Calu3 (cell line): ENCODE measurements at regions of chr18 and their contacts with region 1.

Region 1: GRCh38 chr18:22913857-22914256 is 19.3 kb upstream of the RBBP8 start:
- DNase-seq: peak; percentile 85
- H3K4me3 Mint-ChIP-seq: peak overlapping the region; percentile 76
- H3K27ac Mint-ChIP-seq: peak overlapping the region; percentile 94
- H3K4me1 Mint-ChIP-seq: peaks cover 38% of the 10 kb centered on the region
- H3K27me3 Mint-ChIP-seq: no peaks in the 10 kb centered on the region
- CTCF ChIP-seq: no peak

Region 2: DNA sequence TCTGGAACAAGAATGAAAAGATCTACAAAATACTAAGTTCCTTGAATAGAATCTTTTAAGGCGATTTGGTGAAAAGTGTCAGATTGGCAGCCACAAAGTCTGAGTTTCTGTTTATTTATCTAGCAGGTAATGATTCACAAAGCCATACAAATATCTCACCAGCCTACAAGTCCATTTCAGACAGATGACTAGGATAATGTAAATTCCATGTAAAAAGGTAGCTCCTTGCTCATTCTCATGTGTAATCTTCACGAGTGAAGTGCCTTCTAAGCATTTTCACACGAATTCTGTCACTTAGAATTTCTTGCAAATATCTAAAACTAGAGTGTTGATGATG is 202.5 kb before region 1 on chr18:
- CTCF ChIA-PET with region 1: no interaction called
- intact Hi-C with region 1: no loop called
- DNase-seq: no peak
- H3K4me3 Mint-ChIP-seq: peak overlapping the region; percentile 74
- H3K27ac Mint-ChIP-seq: peak overlapping the region; percentile 70
- H3K4me1 Mint-ChIP-seq: peaks cover 42% of the 10 kb centered on the region
- H3K27me3 Mint-ChIP-seq: no peaks in the 10 kb centered on the region
- CTCF ChIP-seq: no peak

Region 3: DNA sequence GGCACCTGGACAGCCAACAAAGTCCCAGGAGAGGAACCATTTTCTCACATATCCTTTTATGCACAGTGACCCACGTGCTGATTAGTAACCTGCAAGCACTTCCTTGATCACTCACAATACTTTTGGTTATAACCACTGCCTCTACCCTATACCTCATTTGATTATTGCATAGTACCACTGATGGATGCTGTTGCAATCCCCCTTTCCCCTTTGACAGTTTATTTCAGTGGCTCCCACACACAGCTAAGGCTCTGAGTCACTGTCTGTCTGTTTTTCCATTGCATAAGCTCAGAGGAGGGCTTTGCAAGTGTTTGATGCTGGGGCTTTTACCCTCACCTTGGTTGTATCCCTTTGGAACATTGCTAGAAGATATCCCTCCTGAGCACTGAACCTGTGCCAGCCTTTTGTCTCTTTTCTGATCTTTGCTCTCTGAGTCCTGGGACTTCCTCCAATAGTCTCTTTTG is 82.4 kb before region 1 on chr18:
- CTCF ChIA-PET with region 1: interaction called, 3 read pairs
- intact Hi-C with region 1: loop called (anchors 5 kb)
- DNase-seq: no peak
- H3K4me3 Mint-ChIP-seq: no peak overlapping the region
- H3K27ac Mint-ChIP-seq: peak overlapping the region; percentile 25
- H3K4me1 Mint-ChIP-seq: peaks cover 34% of the 10 kb centered on the region
- H3K27me3 Mint-ChIP-seq: no peaks in the 10 kb centered on the region
- CTCF ChIP-seq: no peak

Region 4: DNA sequence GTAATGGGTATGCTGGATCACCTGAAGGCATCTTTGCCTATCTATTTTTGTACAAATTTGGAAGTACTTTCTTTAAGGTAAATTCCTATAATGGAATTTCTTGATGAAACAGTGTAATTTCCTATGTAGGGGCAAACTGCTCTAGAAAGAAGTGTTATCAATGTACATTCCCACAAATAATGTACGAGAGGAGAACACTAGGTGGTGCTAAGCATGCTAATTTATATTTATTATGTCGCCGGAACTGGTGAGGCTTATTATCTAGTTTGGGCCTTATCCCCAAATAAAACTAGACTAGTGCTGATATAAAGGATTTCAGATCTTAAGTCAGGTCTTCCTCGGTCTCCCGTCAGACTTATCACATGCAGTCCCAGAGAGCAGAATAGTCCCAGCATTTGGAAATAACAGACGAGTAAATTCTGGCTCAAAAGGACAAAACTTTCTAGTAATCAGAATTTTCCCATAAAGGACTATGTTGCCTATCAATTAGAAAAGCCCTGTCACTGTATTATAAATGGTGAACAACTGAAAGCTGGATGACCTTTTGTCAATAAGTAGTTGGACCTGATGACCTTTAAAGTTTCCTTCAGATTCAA is 67.7 kb before region 1 on chr18:
- CTCF ChIA-PET with region 1: interaction called, 3 read pairs
- intact Hi-C with region 1: loop called (anchors 1 kb)
- DNase-seq: no peak
- H3K4me3 Mint-ChIP-seq: no peak overlapping the region
- H3K27ac Mint-ChIP-seq: no peak overlapping the region
- H3K4me1 Mint-ChIP-seq: peaks cover 30% of the 10 kb centered on the region
- H3K27me3 Mint-ChIP-seq: no peaks in the 10 kb centered on the region
- CTCF ChIP-seq: peak; percentile 31

Region 5: DNA sequence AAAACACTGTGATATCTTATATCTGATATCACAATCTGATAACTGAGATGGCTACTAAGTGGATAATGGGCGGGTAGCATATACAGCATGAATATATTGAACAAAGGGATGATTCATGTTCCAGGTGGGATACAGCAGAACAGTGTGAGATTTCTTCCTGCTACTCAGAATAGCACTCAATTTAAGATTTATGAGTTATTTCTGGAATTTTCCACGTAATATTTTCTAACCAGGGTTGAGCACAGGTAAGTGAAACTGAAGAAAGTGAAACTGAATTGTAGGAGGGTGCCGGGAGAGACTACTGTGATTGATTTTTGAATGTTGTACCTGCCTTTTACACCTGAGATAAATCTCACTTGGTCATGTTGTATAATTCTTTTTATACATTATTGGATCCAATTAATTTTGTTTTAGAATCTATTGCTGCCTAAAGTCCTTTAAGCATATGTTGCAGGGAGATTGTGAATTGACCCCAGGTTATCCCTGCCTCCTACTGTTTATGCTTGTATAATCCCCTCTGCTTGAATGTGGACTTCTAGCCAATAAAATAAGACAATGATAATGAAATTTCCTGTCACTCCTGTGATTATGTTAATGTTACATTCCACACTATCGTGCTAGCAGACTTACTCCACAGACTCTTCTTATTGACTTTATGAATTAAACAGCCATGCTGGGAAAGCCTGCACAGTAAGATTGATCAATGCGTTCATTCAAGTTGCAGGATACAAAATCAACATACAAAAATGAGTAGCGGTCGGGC is 48.3 kb before region 1 on chr18:
- CTCF ChIA-PET with region 1: no interaction called
- intact Hi-C with region 1: loop called (anchors 5 kb)
- DNase-seq: peak; percentile 16
- H3K4me3 Mint-ChIP-seq: peak overlapping the region; percentile 54
- H3K27ac Mint-ChIP-seq: peak overlapping the region; percentile 11
- H3K4me1 Mint-ChIP-seq: peaks cover 23% of the 10 kb centered on the region
- H3K27me3 Mint-ChIP-seq: no peaks in the 10 kb centered on the region
- CTCF ChIP-seq: no peak

Region 6: GRCh38 chr18:22946846-22947245 is 33.0 kb after region 1 on chr18:
- CTCF ChIA-PET with region 1: no interaction called
- intact Hi-C with region 1: no loop called
- DNase-seq: no peak
- H3K4me3 Mint-ChIP-seq: no peak overlapping the region
- H3K27ac Mint-ChIP-seq: no peak overlapping the region
- H3K4me1 Mint-ChIP-seq: no peaks in the 10 kb centered on the region
- H3K27me3 Mint-ChIP-seq: no peaks in the 10 kb centered on the region
- CTCF ChIP-seq: no peak

Region 7: DNA sequence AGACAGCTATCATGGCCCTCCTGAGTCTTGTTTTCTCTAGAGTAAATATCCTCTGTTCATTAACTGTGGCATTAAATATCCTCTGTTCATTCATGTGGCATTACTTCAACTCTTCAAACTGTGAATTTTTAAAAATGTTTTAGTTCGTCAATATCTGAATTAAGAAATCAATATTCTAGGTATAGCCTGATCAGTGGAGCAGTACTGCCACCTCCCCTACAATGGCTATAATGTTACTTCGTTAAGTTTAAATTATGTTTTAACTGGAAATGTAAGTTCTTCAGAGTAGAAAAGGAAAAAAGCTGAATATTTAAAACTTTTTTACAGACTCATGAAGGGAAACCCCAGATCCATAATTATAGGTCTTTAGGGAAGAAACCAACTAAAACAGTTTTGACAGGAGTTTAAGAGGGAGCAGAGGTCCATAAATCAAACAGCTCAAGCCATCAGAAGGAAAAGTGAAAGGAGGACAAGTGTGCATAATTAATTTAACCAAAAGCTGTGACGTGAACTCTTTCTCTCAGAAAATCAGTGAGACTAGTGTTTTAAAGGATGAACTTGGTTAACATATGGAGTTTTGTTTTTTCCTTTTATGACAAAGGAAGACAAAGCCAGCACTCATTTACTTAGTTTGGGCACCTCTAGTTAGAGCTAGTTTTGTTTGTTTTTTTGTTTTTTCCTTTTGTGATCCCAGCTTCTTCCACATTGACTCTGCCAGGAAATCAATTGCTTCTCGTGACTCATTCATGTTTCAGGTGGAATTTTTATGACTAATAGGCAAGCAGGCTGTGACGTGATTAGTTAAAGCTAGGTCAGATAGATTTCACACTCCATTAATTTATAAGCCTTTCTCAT is 64.2 kb after region 1 on chr18:
- CTCF ChIA-PET with region 1: no interaction called
- intact Hi-C with region 1: loop called (anchors 5 kb)
- DNase-seq: peak; percentile 30
- H3K4me3 Mint-ChIP-seq: peak overlapping the region; percentile 45
- H3K27ac Mint-ChIP-seq: peak overlapping the region; percentile 89
- H3K4me1 Mint-ChIP-seq: peaks cover 60% of the 10 kb centered on the region
- H3K27me3 Mint-ChIP-seq: no peaks in the 10 kb centered on the region
- CTCF ChIP-seq: no peak